ENCODE measurements at regions of chr7 and their contacts with region 1.

Region 1: DNA sequence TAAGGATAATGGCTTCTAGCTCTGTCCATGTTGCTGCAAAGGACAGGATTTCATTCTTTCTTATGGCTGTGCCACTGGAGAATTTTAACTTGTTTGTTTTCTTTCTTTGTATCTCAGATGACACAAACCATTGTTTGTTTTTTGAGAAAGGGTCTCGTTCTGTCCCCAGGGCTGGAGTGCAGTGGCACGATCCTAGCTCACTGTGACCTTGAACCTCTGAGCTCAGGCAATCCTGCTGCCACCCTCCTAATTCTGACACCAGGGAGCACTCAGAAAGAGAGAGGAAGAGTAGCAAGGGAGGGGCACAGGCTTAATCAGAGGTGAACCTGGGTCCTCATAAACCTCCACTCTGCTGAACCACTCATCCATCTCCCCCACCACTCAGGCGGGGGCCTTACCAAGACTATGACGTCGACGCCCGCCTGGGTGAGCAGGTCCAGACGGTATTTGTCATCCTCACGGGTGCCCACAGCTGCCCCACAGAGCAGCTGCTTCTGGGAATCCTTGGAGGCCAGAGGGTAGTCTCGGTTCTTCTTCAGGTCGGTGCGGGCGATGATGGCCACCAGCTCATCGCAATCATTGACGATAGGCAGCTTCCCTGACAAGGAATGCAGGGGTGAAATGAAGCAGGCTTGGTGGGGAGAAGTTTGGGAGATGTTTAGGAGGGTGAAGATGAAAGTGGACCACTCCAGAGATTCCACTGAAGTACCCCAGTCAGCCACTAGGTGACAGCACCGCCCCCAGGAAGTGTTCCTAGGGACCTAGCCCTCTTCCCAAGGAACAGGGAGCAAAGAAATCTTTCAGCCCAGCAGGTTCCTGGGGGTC is 11.6 kb downstream of the IMPDH1 start:
- DNase-seq: peak; percentile 42
- H3K4me3 ChIP-seq: no peak overlapping the region
- H3K27ac ChIP-seq: no peak overlapping the region
- H3K4me1 ChIP-seq: no peaks in the 10 kb centered on the region
- H3K27me3 ChIP-seq: no peaks in the 10 kb centered on the region
- CTCF ChIP-seq: peak; percentile 80 to 92
- POLR2A ChIP-seq: no peak

Region 2: GRCh38 chr7:128409596-128410160 is 11.4 kb after region 1 on chr7 and contains the start of gene IMPDH1:
- CTCF ChIA-PET with region 1: interaction called, 25 read pairs
- POLR2A ChIA-PET with region 1: no interaction called
- dilution Hi-C with region 1: no loop called
- intact Hi-C with region 1: no loop called
- DNase-seq: no peak
- H3K4me3 ChIP-seq: peak within 1 kb of the TSS; percentile 74 to 84 (median 83)
- H3K27ac ChIP-seq: no peak within 1 kb of the TSS
- H3K4me1 ChIP-seq: peaks cover 18% of the 10 kb centered on the region
- H3K27me3 ChIP-seq: peaks cover 2 to 6% of the 10 kb centered on the region in 2 experiments
- CTCF ChIP-seq: no peak
- POLR2A ChIP-seq: peak; percentile 71
- total RNA-seq, gene IMPDH1: 91.7 and 97.9 TPM in 2 replicates

Region 3: DNA sequence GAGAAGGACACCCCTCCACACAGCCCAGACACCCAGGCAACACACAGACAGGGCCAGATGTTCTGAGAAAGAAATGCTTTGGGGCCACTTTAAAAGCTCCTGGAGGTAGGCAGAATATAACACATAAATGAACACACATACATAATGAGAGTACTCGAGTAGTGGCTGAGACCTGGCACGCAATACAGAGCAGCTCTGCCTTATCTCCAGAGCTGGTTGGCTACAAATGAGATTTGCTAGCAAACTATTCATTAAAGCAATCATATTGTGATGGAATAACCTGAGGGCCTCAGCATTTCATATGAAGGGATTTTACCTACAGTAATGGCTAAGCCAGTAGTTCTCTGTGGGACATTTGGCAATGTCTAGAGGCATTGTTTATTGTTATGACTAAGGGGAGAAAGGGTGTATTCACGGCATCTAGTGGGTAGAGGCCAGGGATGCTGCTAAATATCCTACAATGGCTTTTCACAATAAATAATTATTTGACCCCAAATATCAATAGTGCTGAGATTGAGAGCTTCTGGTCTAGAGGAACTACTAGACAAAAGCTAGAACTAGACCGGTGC is 17.1 kb after region 1 on chr7:
- CTCF ChIA-PET with region 1: interaction called, 25 read pairs
- POLR2A ChIA-PET with region 1: no interaction called
- dilution Hi-C with region 1: no loop called
- intact Hi-C with region 1: no loop called
- DNase-seq: no peak
- H3K4me3 ChIP-seq: no peak overlapping the region
- H3K27ac ChIP-seq: no peak overlapping the region
- H3K4me1 ChIP-seq: peaks cover 4% of the 10 kb centered on the region
- H3K27me3 ChIP-seq: peaks cover 6 to 8% of the 10 kb centered on the region in 2 experiments
- CTCF ChIP-seq: no peak
- POLR2A ChIP-seq: no peak

Region 4: GRCh38 chr7:128435327-128435686 is 37.1 kb after region 1 on chr7:
- CTCF ChIA-PET with region 1: no interaction called
- POLR2A ChIA-PET with region 1: no interaction called
- dilution Hi-C with region 1: no loop called
- intact Hi-C with region 1: no loop called
- DNase-seq: no peak
- H3K4me3 ChIP-seq: no peak overlapping the region
- H3K27ac ChIP-seq: no peak overlapping the region
- H3K4me1 ChIP-seq: no peaks in the 10 kb centered on the region
- H3K27me3 ChIP-seq: peaks cover 12 to 14% of the 10 kb centered on the region in 2 experiments
- CTCF ChIP-seq: no peak
- POLR2A ChIP-seq: no peak

Region 5: DNA sequence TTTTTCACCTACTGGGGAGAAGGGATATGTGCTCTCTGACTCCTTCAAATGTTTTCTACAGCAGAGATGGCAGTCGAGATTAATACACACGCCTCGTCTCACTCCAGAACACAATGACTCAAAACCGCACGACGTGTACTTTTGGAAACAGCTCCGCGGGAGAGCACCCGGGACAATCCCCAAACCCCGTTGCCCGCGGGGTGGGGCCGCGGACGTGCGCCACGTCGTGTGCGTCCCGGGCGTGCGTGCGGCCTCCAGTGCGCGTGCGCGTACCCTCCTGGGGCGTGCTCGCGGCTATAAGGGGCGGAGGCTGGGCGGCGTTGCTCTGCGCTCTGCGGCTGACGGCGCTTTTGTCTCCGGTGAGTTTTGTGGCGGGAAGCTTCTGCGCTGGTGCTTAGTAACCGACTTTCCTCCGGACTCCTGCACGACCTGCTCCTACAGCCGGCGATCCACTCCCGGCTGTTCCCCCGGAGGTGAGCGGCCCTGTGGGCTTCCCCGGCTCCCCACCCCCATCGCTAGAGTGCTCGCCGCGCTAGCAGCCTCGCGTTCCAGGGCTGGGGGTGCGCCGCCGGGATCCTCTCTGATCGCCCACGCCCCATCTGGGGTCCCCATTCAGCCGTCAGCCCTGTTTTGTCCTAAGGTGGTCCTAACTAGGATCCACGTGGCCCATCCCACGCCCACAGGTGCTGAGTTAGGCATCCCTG is 57.5 kb after region 1 on chr7 and contains the start of gene HILPDA:
- CTCF ChIA-PET with region 1: interaction called, 14 read pairs
- POLR2A ChIA-PET with region 1: no interaction called
- dilution Hi-C with region 1: no loop called
- intact Hi-C with region 1: loop called (anchors 1 kb)
- DNase-seq: peak; percentile 90
- H3K4me3 ChIP-seq: peak within 1 kb of the TSS; percentile 16 to 77 (median 60)
- H3K27ac ChIP-seq: peak within 1 kb of the TSS; percentile 31
- H3K4me1 ChIP-seq: peaks cover 29% of the 10 kb centered on the region
- H3K27me3 ChIP-seq: peaks cover 2 to 12% of the 10 kb centered on the region in 2 experiments
- CTCF ChIP-seq: no peak
- POLR2A ChIP-seq: peak; percentile 95
- total RNA-seq, gene HILPDA: 14.1 and 14.4 TPM in 2 replicates

Measured in endothelial cell of umbilical vein (primary cell).